Activated CD4-positive, alpha-beta T cell treated with anti-CD3 and anti-CD28 coated beads, Interleukin-2, amount 10 ng/mL, durations not matched to agents 24 days and 14 days (primary cell): ENCODE measurements at regions of chr16 and their contacts with region 1.

Region 1: DNA sequence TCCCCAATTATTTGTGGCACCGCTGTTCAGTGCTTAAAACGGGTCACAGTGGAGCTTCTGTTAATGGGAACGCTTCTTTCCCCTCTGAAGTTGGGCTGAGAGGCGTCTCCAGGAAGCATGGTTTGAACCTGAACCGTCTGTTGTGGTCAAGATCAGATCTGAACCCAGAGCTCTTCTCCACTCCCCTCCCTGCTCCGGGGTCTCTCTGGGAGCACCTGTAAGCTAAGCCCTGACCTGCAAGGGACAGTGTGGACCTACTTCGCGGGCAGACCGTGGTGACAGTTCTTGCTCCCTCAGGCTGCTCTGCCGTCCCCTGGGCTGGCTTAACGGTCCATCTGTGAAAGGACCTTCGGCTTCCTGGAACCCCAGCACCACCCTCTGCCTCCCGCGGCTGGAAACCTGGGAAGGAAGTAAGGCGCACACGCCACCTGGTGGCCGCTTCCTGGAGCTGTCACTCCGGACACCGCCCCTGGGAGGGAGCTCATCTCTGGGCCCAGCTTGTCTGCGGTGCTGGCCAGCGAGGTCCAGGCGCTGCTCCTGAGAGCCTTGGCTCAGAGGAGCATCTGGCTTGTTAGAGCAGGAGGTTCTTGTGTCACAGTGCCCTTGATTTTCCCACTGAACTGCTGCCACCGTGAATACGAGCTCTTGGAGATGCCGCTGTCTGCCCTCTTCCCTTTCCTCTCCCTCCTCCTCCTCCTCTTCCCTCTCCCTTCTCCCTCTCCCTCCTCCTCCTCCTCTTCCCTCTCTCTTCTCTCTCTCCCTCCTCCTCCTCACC is 518.5 kb upstream of the EEF2KMT start:
- DNase-seq: peak; percentile 78
- H3K4me3 Mint-ChIP-seq: peak overlapping the region; percentile 69
- H3K27ac Mint-ChIP-seq: no peak overlapping the region
- H3K4me1 Mint-ChIP-seq: peaks cover 3% of the 10 kb centered on the region
- H3K27me3 Mint-ChIP-seq: peaks cover 2% of the 10 kb centered on the region

Region 2: DNA sequence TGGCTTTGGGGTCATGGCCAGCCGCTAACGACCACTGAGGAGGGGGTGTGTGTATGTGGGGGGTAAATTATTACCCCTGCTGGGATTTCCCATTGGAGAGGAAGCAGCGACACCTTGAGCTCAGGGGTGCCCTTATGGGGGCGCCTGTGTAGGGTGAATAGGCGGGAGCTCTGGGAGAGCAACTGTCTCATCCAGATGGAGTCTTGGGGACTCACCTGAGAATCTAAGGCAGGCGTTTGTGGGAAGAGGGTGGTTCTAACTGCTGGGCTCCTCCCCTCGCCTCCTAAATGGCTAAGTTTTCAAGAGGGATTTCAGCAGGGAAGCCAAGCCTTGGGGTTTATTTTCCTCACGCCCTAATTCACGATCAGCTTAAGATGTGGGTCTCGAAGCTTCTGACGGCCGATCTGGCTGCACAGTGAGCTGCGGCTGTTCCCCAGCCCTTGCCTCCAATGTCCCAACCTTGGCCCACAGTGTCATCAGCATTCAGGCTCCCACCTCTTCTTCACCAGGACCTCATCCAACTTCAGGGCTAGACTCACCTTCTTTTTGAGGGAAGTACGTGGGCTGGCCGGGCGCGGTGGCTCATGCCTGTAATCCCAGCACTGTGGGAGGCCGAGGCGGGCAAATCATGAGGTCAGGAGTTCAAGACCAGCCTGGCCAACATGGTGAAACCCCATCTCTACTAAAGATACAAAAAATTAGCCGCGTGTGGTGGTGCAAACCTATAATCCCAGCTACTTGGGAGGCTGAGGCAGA is 381.6 kb before region 1 on chr16:
- intact Hi-C with region 1: loop called (anchors 10 kb)
- DNase-seq: no peak
- H3K4me3 Mint-ChIP-seq: no peak overlapping the region
- H3K27ac Mint-ChIP-seq: no peak overlapping the region
- H3K4me1 Mint-ChIP-seq: peaks cover 2% of the 10 kb centered on the region
- H3K27me3 Mint-ChIP-seq: peaks cover 9% of the 10 kb centered on the region

Region 3: GRCh38 chr16:5466551-5466950 is 149.5 kb before region 1 on chr16:
- intact Hi-C with region 1: no loop called
- DNase-seq: no peak
- H3K4me3 Mint-ChIP-seq: no peak overlapping the region
- H3K27ac Mint-ChIP-seq: no peak overlapping the region
- H3K4me1 Mint-ChIP-seq: no peaks in the 10 kb centered on the region
- H3K27me3 Mint-ChIP-seq: no peaks in the 10 kb centered on the region

Region 4: GRCh38 chr16:5502467-5502869 is 113.6 kb before region 1 on chr16:
- intact Hi-C with region 1: loop called (anchors 5 kb)
- DNase-seq: no peak
- H3K4me3 Mint-ChIP-seq: no peak overlapping the region
- H3K27ac Mint-ChIP-seq: no peak overlapping the region
- H3K4me1 Mint-ChIP-seq: no peaks in the 10 kb centered on the region
- H3K27me3 Mint-ChIP-seq: no peaks in the 10 kb centered on the region